Panc1 (cell line): ENCODE measurements at regions of chr1 and their contacts with region 1.

Region 1: GRCh38 chr1:175124861-175125260 is 57.2 kb downstream of the TNN start:
- DNase-seq: no peak
- ATAC-seq: no peak
- H3K4me3 ChIP-seq: no peak overlapping the region
- H3K27ac ChIP-seq: no peak overlapping the region
- H3K4me1 ChIP-seq: no peaks in the 10 kb centered on the region
- H3K27me3 ChIP-seq: no peaks in the 10 kb centered on the region
- CTCF ChIP-seq: no peak

Region 2: DNA sequence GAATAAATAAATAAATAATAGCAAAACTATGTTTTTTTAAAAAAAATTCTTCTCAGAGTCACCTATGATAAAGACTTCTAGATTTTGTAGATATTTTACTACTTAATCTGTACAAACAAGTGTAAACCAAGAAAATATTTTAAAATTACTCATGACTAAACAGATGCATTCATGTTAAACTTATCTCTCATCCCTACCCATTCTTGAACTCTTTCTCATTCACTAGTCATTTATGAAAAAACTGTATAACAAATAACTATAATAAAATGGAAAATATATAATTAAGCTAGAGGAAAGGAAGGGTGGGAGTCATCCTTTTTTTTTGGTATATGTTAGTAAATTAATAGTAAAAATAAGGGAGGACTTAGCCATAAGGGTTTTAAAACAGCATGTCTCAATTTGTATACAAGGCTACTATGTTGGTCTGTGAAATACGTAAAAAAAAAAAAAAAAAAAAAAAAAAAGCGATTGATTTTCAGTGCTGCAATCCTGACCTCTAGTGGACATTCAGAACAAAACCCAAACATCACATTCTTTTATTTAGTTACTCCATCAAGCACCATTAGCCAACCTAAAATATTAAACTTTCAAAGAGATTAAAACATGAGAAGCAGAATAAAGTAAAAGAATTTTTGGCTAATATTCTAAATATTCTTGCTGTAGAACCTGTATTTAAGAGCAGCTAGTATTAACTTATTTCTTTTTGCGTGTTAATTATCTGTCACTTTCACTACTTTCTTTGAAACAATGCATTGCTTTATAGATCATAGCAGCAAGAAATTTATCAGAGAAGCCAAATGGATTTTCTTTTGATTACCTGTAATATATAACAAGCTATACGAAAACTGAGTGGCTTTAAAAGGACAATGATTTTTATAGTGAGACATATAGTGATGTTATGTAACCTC is 381.0 kb before region 1 on chr1:
- CTCF ChIA-PET with region 1: interaction called, 13 read pairs
- POLR2A ChIA-PET with region 1: no interaction called
- in situ Hi-C with region 1: no loop called
- intact Hi-C with region 1: no loop called
- DNase-seq: peak; percentile 12
- ATAC-seq: no peak
- H3K4me3 ChIP-seq: no peak overlapping the region
- H3K27ac ChIP-seq: no peak overlapping the region
- H3K4me1 ChIP-seq: no peaks in the 10 kb centered on the region
- H3K27me3 ChIP-seq: no peaks in the 10 kb centered on the region
- CTCF ChIP-seq: peak; percentile 72; the same call in 1 of the 2 replicates

Region 3: DNA sequence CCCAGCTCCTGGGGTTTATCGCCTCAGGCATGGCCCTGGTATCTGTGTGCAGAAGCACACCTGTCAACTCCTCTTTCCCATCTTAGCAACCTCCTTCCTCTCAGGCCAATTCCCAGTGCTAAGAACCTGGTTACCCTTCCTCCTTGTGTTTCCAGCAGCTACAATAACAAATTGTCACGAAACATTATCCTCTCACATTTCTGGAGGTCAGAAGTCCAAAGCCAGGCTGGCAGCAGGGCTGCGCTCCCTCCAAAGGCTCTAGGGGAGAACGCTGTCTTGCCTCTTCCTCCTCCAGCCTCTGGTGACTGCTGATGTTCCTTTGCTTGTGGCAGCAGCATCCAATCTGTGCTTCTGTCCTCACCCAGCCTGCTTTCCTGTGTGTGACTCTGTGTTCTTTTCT is 90.9 kb before region 1 on chr1:
- CTCF ChIA-PET with region 1: interaction called, 31 read pairs
- POLR2A ChIA-PET with region 1: no interaction called
- in situ Hi-C with region 1: no loop called
- intact Hi-C with region 1: loop called (anchors 1 kb)
- DNase-seq: no peak
- ATAC-seq: no peak
- H3K4me3 ChIP-seq: no peak overlapping the region
- H3K27ac ChIP-seq: no peak overlapping the region
- H3K4me1 ChIP-seq: 0 out of 2 replicates have a peak, but pooled peaks cover 3% of the 10 kb centered on the region
- H3K27me3 ChIP-seq: peaks cover 6% of the 10 kb centered on the region; the same call in 1 of the 2 replicates
- CTCF ChIP-seq: no peak

Region 4: DNA sequence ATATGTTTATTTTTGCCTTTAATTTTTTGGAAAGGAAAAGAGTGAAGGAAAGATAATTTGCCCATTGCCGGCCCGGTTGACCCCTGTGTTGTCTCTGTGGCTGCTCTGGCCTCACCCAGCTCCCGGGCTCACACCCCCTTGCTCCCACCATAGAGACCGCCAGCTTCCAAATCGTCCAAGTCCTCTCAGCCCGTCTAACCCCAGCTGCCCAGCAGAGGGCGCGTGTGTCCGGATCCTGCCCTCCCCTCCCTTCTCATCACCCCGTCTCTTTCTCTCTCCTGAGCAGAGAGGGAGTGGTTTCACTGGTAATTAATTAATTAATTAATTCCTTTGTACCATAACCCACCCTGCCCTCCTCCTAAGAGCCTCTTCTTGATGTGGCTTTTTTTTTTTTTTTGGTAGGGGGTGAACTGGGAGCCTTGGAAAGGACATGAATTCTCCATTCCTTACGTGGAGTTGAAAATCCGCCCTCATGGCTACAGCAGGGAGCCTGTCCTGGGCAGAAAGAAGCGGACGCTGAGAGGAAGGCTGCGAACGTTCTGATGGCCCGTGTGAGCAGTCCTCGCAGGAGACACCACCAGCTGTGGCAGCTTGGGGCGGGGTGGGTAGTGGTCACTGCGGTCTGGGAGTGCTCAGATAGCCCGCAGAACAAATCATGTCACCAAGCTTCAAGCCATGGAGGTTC is 21.8 kb after region 1 on chr1:
- CTCF ChIA-PET with region 1: interaction called, 21 read pairs
- POLR2A ChIA-PET with region 1: no interaction called
- in situ Hi-C with region 1: no loop called
- intact Hi-C with region 1: no loop called
- DNase-seq: no peak
- ATAC-seq: peak; percentile 92
- H3K4me3 ChIP-seq: peak overlapping the region in 1 of 2 experiments; percentile 25; a peak in 1 of 4 replicates
- H3K27ac ChIP-seq: no peak overlapping the region
- H3K4me1 ChIP-seq: no peaks in the 10 kb centered on the region
- H3K27me3 ChIP-seq: peaks cover 19% of the 10 kb centered on the region
- CTCF ChIP-seq: peak; percentile 96

Region 5: DNA sequence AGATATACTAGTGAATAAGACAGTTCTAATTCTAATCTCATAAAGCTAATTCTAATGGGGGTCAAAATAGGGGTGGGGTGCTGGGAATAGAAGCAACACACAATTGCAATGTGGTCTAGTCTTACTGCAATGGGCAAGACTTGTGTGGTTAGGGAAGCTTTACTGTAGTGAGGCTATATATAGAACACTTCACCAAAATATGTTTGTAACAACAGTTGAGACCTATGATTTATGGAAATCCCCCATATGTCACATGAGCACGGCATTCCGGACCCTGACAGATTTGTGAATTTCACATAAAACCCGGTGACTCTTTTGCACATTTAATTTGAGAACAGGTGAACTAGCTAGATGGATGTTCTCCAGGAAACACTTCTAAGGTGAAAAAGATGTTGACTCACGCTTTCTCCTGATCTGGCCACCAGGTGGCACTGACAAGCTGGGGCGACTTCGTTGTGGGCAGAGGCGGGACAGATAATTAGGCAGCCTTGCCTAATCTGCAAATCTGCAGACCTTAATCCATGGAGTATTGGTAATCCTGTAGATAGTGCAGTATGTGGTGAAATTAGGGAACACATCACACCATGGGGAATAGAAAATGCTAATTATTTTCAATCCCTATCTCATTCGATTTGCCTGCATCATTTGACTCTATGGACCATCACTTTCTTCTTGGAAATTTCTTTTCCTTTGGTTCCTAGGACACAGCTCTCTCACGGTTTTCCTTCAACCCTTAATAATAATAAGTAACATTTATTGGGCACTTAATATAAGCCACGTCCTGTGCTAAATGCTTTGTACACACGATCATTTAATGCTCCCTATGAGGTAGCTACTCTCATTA is 30.0 kb after region 1 on chr1:
- CTCF ChIA-PET with region 1: interaction called, 21 read pairs
- POLR2A ChIA-PET with region 1: no interaction called
- in situ Hi-C with region 1: no loop called
- intact Hi-C with region 1: no loop called
- DNase-seq: peak; percentile 52
- ATAC-seq: peak; percentile 68; the same call in 1 of the 2 replicates
- H3K4me3 ChIP-seq: no peak overlapping the region
- H3K27ac ChIP-seq: no peak overlapping the region
- H3K4me1 ChIP-seq: no peaks in the 10 kb centered on the region
- H3K27me3 ChIP-seq: peaks cover 11% of the 10 kb centered on the region
- CTCF ChIP-seq: peak; percentile 90